CD8-positive, alpha-beta T cell (primary cell): ENCODE measurements at regions of chr18 and their contacts with region 1.

Region 1: GRCh38 chr18:21012308-21012707 is 99.3 kb downstream of the ROCK1 start:
- DNase-seq: no peak
- ATAC-seq: no peak
- H3K4me3 ChIP-seq: no peak overlapping the region
- H3K4me3 Mint-ChIP-seq: no peak overlapping the region
- H3K27ac ChIP-seq: no peak overlapping the region
- H3K27ac Mint-ChIP-seq: peak overlapping the region; percentile 27
- H3K4me1 ChIP-seq: no peaks in the 10 kb centered on the region
- H3K4me1 Mint-ChIP-seq: peaks cover 12% of the 10 kb centered on the region
- H3K27me3 ChIP-seq: no peaks in the 10 kb centered on the region
- H3K27me3 Mint-ChIP-seq: no peaks in the 10 kb centered on the region
- CTCF ChIP-seq: no peak

Region 2: GRCh38 chr18:20966795-20967194 is 45.5 kb before region 1 on chr18:
- CTCF ChIA-PET with region 1: no interaction called
- POLR2A ChIA-PET with region 1: no interaction called
- intact Hi-C with region 1: loop called in 1 of 2 experiments (anchors 10 kb)
- DNase-seq: no peak
- ATAC-seq: no peak
- H3K4me3 ChIP-seq: no peak overlapping the region
- H3K4me3 Mint-ChIP-seq: no peak overlapping the region
- H3K27ac ChIP-seq: no peak overlapping the region
- H3K27ac Mint-ChIP-seq: no peak overlapping the region
- H3K4me1 ChIP-seq: no peaks in the 10 kb centered on the region
- H3K4me1 Mint-ChIP-seq: peaks cover 2% of the 10 kb centered on the region
- H3K27me3 ChIP-seq: no peaks in the 10 kb centered on the region
- H3K27me3 Mint-ChIP-seq: no peaks in the 10 kb centered on the region
- CTCF ChIP-seq: no peak

Region 3: GRCh38 chr18:21057112-21057511 is 44.8 kb after region 1 on chr18:
- CTCF ChIA-PET with region 1: no interaction called
- POLR2A ChIA-PET with region 1: no interaction called
- intact Hi-C with region 1: no loop called
- DNase-seq: no peak
- ATAC-seq: no peak
- H3K4me3 ChIP-seq: no peak overlapping the region
- H3K4me3 Mint-ChIP-seq: no peak overlapping the region
- H3K27ac ChIP-seq: no peak overlapping the region
- H3K27ac Mint-ChIP-seq: no peak overlapping the region
- H3K4me1 ChIP-seq: peaks cover 19% of the 10 kb centered on the region
- H3K4me1 Mint-ChIP-seq: peaks cover 36% of the 10 kb centered on the region
- H3K27me3 ChIP-seq: no peaks in the 10 kb centered on the region
- H3K27me3 Mint-ChIP-seq: no peaks in the 10 kb centered on the region
- CTCF ChIP-seq: no peak